ENCODE measurements at regions of chr10 and their contacts with region 1.

Region 1: GRCh38 chr10:15370856-15371701 is at the start of gene FAM171A1:
- DNase-seq: peak; percentile 76
- H3K4me3 Mint-ChIP-seq: peak within 1 kb of the TSS; percentile 70
- H3K27ac Mint-ChIP-seq: no peak within 1 kb of the TSS
- H3K4me1 Mint-ChIP-seq: peaks cover 8% of the 10 kb centered on the region
- H3K27me3 Mint-ChIP-seq: peaks cover 3% of the 10 kb centered on the region
- total RNA-seq, gene FAM171A1: 4.8 to 5.2 TPM

Region 2: DNA sequence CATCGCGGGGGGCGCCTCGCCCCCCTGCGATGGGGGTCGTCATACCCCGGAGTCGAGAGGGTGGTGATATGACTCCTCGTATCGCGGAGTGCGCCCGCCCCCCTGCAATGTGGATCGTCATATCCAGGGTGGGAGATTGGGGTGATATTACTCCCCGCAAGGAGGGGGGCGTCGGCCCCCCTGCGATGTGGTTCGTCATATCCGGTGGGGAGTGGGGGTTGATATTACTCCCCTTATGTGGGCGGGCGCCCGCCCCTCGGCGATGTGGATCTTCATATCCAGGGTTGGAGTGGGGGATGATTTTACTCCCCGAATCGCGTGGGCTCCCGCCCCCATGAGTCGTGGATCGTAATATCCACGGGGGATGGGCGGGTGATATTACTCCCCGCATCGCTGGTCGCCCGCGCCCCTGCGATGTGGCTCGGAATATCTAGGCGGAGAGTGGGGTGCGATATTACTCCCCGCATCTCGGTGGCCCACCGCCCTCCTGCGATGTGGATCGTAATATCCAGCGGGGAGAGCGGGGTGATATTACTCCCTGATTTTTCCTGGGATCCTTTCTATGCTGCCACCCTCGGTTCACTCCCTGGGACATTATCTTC is 375.0 kb before region 1 on chr10:
- CTCF ChIA-PET with region 1: interaction called, 4 read pairs
- intact Hi-C with region 1: loop called (anchors 1 kb)
- DNase-seq: no peak
- H3K4me3 Mint-ChIP-seq: peak overlapping the region; percentile 13
- H3K27ac Mint-ChIP-seq: no peak overlapping the region
- H3K4me1 Mint-ChIP-seq: peaks cover 7% of the 10 kb centered on the region
- H3K27me3 Mint-ChIP-seq: peaks cover 3% of the 10 kb centered on the region

Region 3: DNA sequence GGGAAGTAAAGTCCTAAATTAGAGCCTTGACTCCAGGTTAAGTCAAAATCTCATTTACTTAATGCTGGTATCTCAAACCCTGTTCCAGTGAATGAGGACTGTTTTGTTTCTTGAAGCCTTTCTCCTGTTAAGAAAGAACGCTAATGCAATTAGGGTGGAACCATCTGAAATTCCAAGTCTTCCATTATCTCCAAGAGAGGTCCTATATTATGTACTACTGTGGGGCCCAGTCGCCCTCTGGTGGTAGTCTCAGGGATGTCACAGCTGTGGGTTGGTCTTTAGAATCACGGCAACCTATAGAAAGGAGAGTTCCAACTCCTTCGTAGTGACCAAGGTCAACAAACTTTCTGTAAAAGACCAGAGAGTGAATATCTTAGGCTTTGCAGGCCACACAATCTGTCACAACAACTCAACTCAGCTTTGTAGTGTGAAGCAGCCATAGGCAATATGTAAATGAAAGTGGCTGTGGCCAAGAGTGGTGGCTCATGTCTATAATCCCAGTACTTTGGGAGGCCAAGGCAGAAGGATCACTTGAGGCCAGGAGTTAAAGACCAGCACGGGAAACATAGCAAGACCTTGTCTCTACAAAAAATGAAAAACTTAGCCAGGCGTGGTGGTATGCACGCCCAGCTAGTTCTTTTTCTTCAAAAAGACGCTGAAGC is 264.6 kb before region 1 on chr10:
- CTCF ChIA-PET with region 1: interaction called, 8 read pairs
- intact Hi-C with region 1: loop called (anchors 2 kb)
- DNase-seq: peak; percentile 85
- H3K4me3 Mint-ChIP-seq: no peak overlapping the region
- H3K27ac Mint-ChIP-seq: peak overlapping the region; percentile 39
- H3K4me1 Mint-ChIP-seq: peaks cover 12% of the 10 kb centered on the region
- H3K27me3 Mint-ChIP-seq: no peaks in the 10 kb centered on the region

Region 4: DNA sequence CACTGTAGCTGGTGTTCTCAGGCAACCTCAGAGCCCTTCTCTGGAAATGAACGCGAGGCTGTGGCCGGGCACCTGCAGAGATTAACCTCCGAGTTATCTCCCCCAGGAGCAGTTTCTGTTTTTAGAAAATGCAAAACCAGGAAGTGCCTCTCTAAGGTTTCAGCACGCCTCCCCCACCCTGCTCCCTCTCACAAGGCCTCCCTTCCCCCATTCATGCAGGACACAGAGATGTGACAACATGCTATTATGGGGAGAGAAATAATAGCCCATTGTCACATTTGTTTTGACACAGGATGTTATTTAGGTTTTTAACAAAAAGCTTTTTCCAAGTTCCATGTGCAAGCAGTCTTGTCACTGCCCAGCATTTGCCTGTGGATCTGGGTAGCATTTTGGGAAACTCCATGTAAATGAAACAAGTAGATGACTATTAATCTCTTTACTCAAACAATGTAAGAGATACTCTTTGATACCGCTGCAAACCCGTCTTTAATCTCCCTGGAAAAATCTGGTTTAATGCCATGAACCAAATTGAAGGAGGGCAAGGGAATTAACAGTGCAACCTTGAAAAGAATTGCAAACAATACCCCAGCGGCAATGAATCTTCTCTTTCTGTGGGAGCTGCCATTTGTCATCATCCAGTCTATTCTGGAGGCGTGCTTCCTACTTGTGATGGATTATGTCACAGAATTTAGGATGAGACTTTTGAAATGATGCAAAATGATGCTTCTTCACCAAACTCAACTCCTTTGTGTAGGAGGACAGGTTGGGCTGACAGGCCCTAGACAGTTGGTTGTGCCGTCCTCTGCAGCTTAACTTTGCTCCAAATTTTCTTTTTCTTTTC is 116.1 kb before region 1 on chr10:
- CTCF ChIA-PET with region 1: no interaction called
- intact Hi-C with region 1: loop called (anchors 5 kb)
- DNase-seq: peak; percentile 59
- H3K4me3 Mint-ChIP-seq: peak overlapping the region; percentile 79
- H3K27ac Mint-ChIP-seq: peak overlapping the region; percentile 80
- H3K4me1 Mint-ChIP-seq: peaks cover 39% of the 10 kb centered on the region
- H3K27me3 Mint-ChIP-seq: no peaks in the 10 kb centered on the region

Measured in activated naive CD4-positive, alpha-beta T cell treated with anti-CD3 and anti-CD28 coated beads for 36 hours (primary cell).